Sigmoid colon (tissue), 7 donors: ENCODE measurements at regions of chr2 and their contacts with region 1.

Region 1: GRCh38 chr2:67684991-67685390 is 287.9 kb downstream of the ETAA1 start:
- DNase-seq: no peak
- H3K4me3 ChIP-seq: no peak overlapping the region
- H3K27ac ChIP-seq: no peak overlapping the region
- H3K4me1 ChIP-seq: no peaks in the 10 kb centered on the region
- H3K27me3 ChIP-seq: no peaks in the 10 kb centered on the region
- CTCF ChIP-seq: no peak
- EP300 ChIP-seq: no peak
- POLR2A ChIP-seq: no peak

Region 2: DNA sequence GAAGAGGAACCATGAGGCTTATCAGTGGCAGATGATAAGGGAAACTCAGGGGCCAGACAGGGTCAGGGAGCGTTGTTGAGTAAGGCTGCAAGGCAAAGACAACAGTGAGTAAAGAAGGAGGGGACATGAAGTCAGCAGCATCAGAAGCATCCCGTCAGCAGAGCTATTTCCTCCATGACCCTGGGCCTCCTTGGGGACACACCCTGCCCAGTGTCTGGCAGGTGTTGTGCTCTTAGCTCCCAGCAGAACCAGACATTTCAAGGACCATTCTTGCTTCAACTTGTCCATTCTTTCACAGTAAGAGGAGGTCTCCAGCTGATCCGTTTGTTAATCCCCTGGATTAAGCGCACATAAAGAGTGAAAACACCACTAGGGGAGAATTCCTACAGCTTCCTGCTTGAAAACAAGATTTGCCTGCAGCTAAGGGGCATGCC is 1338.7 kb before region 1 on chr2:
- intact Hi-C with region 1: loop called (anchors 5 kb)
- DNase-seq: no peak
- H3K4me3 ChIP-seq: no peak overlapping the region
- H3K27ac ChIP-seq: no peak overlapping the region
- H3K4me1 ChIP-seq: no peaks in the 10 kb centered on the region
- H3K27me3 ChIP-seq: no peaks in the 10 kb centered on the region
- CTCF ChIP-seq: no peak
- EP300 ChIP-seq: no peak
- POLR2A ChIP-seq: no peak